Right cardiac atrium (tissue), 5 donors: ENCODE measurements at regions of chr3 and their contacts with region 1.

Region 1: DNA sequence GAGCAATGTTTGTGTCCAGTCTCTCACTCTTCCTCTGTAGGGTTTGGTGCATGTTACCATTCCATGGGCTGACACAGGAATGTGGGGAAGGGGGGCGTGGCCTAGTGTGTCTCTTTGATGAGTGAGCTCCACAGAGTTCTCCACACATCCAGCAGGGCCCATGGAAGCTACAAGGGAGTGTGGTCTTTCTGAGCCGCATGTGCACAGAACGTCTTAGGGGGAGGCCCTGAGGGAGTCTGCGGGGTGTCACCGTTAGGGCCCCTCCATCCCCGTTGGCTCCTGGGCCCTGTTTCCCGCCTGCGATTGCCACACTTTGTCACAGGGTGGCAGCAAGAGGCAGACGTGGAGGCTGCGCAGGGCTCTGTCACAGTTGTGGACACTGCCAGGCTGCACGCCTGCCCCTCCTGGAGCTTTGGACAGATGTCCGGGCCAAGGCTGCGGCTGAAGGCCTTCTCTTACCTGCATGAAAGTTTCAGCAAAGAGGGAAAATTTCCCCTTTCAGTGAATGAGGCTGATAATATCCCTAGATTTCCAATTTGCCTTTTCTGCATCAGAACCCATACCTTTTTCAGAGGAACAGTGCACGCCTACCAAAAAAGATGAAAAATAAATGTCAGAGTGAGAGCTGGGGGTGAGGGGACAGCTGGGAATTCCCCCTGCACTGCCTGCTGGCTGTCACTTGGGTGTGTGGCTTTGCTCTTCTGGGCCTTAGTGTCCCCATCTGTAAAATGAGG is 24.3 kb downstream of the CACNA2D3 start:
- DNase-seq: peak; percentile 74 to 89 (median 86)
- ATAC-seq: peak; percentile 89 to 91
- H3K4me3 ChIP-seq: no peak overlapping the region
- H3K27ac ChIP-seq: no peak overlapping the region
- H3K4me1 ChIP-seq: peaks cover 6% of the 10 kb centered on the region
- H3K27me3 ChIP-seq: no peaks in the 10 kb centered on the region

Region 2: GRCh38 chr3:53865732-53866499 is 280.8 kb before region 1 on chr3:
- intact Hi-C with region 1: no loop called
- DNase-seq: no peak
- ATAC-seq: no peak
- H3K4me3 ChIP-seq: no peak overlapping the region
- H3K27ac ChIP-seq: no peak overlapping the region
- H3K4me1 ChIP-seq: no peaks in the 10 kb centered on the region
- H3K27me3 ChIP-seq: no peaks in the 10 kb centered on the region

Region 3: GRCh38 chr3:53941956-53942355 is 204.7 kb before region 1 on chr3:
- intact Hi-C with region 1: loop called in 1 of 4 experiments (anchors 10 kb)
- DNase-seq: no peak
- ATAC-seq: peak in 1 of 2 donors; percentile 53
- H3K4me3 ChIP-seq: no peak overlapping the region
- H3K27ac ChIP-seq: no peak overlapping the region
- H3K4me1 ChIP-seq: no peaks in the 10 kb centered on the region
- H3K27me3 ChIP-seq: no peaks in the 10 kb centered on the region

Region 4: DNA sequence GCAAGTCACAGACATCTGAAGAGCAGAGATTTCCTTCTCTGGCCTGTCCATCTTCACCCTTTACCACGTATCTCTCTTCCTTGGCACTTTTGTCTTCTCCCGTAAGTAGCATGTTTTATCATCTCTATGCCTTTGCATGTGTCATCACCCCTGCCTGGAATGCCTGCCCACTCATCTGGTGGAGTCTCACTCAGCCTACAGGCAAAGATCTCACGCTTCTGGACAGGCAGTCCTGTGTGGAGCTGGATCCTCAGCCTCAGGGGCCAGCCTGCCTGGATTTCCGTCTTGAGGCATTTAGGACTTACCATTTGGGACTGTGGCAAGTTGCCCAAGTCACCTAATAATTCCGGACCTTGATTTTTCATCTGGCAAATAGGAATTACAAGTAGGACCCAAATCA is 138.6 kb before region 1 on chr3:
- intact Hi-C with region 1: no loop called
- DNase-seq: no peak
- ATAC-seq: no peak
- H3K4me3 ChIP-seq: no peak overlapping the region
- H3K27ac ChIP-seq: no peak overlapping the region
- H3K4me1 ChIP-seq: no peaks in the 10 kb centered on the region
- H3K27me3 ChIP-seq: no peaks in the 10 kb centered on the region

Region 5: DNA sequence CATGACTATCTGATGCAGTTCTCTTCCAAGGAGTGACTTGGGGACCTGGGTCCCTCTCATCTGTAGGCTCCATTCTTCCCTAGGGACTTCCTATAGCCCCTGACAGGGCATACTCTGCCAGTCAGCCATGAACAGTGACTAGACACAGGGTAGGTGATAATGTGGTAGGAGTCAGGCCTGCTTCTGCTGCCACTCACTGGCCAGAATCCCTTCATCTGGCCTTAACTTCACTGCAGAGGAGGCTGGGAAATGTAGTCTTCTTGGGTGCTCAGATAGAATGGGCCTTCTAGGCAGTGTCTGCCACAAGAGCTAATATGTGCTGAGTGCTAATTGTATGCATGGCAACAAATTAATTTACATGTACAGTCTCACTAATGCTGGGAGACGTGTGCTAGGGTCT is 60.2 kb after region 1 on chr3:
- intact Hi-C with region 1: no loop called
- DNase-seq: no peak
- ATAC-seq: peak in 1 of 2 donors; percentile 43
- H3K4me3 ChIP-seq: no peak overlapping the region
- H3K27ac ChIP-seq: no peak overlapping the region
- H3K4me1 ChIP-seq: peaks cover 8% of the 10 kb centered on the region
- H3K27me3 ChIP-seq: no peaks in the 10 kb centered on the region

Region 6: DNA sequence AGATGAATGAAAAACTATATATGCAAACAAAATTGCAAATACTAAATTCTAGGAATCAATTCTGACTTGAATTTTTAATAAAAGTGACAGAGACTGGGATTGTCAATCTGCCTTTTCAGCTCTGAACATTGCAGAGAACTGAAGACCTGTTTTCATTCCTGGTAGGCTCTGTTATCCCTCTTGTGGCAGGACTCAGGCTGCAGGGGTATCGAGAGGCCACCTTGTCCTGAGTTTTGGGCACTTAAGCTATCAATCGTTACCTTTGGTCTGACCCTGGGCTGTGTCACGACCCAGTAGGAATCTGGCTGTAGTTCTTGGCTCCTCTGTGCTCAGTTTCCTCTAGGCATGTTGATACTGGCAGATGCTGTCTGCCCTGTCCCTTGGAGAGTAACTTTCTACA is 213.6 kb after region 1 on chr3:
- intact Hi-C with region 1: loop called in 1 of 4 experiments (anchors 5 kb)
- DNase-seq: no peak
- ATAC-seq: peak in 1 of 2 donors; percentile 21
- H3K4me3 ChIP-seq: no peak overlapping the region
- H3K27ac ChIP-seq: no peak overlapping the region
- H3K4me1 ChIP-seq: peaks cover 7% of the 10 kb centered on the region
- H3K27me3 ChIP-seq: no peaks in the 10 kb centered on the region

Region 7: DNA sequence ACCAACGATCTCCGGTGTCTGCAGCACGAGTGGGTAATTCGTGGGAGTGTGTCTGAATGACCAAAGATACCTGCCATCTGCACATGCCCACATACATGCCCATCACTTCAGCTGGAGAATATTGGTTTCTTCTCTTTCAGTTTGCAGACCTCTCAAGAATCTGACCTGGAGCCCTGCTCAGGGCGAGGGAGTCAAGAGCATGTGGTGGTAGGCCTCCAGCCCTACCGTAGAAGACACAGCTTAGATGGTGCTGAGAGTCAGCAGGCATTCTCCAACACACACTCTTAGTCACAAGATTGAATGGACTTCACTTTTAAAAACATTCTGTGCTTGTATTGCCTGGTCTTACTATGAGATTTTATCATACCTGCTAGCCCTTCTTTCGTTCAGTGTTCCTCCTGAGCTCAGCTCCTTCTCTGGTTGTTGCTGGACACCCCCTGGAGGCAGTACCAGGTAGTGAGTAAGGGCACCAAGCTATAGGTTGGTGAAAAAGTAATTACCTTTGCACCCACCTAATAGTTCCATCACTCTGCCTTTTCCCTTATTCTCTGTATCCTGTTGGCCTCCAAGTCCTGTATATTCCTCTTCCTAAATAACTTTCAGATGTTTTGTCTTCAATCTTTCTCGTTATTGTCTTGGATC is 227.7 kb after region 1 on chr3:
- intact Hi-C with region 1: loop called in 1 of 4 experiments (anchors 10 kb)
- DNase-seq: no peak
- ATAC-seq: no peak
- H3K4me3 ChIP-seq: no peak overlapping the region
- H3K27ac ChIP-seq: no peak overlapping the region
- H3K4me1 ChIP-seq: peaks cover 15% of the 10 kb centered on the region
- H3K27me3 ChIP-seq: no peaks in the 10 kb centered on the region

Region 8: DNA sequence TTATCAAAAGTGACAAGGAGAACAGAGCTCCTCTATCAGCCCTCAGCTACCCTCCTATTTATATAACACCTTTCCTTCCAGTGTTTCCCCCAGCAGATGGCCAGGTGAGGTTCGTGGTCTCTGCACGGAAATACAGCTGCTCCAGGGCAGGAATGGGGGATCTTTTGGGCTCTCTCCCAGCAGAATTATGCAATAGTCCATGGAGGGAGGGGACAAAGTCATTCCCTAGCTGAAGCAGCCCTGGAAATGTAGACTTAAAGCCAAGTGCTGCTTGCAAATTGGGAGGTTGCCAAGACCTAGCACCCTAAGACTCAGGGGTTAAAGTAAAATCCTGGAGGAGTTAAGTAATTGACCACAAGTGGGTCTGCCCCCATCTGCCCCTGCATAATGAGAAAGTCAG is 524.8 kb after region 1 on chr3:
- intact Hi-C with region 1: no loop called
- DNase-seq: no peak
- ATAC-seq: no peak
- H3K4me3 ChIP-seq: no peak overlapping the region
- H3K27ac ChIP-seq: no peak overlapping the region
- H3K4me1 ChIP-seq: peaks cover 7% of the 10 kb centered on the region
- H3K27me3 ChIP-seq: no peaks in the 10 kb centered on the region